ENCODE measurements at regions of chr3 and their contacts with region 1.

Region 1: DNA sequence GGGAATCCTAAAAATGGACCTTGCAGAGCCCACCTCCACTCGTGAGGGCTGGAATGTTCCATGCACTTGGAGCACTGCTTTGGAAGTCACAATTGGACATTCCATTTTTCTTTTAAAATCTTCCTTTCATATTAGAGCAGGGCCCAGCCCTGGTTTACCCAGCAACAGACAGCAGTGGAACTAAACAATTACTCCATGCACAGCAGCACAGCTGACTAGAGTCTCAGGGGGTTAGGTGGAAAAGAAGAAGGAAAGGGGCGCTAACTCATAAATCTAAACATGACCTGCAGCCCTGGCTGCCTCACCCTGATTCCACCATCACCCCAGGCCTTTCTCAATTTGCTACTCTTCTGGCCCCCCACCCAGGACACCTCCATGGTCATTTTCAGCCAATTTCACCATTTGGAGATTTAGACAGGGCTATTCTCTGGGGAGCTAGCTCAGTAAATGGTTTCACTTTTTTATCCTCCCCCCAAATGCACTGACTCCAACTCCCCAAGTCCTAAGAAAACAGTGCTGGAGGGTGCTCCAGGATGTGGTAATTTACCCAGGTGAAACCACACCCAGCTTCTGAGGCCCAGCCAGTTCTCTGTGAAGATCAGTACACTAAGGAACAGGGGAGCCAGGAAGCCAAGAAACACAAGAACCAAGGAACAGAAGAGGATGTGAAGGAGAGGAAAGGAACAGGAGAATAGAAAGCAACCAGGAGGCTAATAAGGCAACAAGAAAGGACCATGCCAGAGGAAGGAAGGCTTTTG is 1.6 kb upstream of the LRRC31 start:
- DNase-seq: peak; percentile 43
- ATAC-seq: peak; percentile 88
- H3K4me3 ChIP-seq: no peak overlapping the region
- H3K27ac ChIP-seq: no peak overlapping the region
- H3K4me1 ChIP-seq: peaks cover 10% of the 10 kb centered on the region
- H3K27me3 ChIP-seq: no peaks in the 10 kb centered on the region
- CTCF ChIP-seq: no peak

Region 2: GRCh38 chr3:169911272-169911671 is 40.0 kb after region 1 on chr3 and contains the start of gene SAMD7:
- CTCF ChIA-PET with region 1: no interaction called
- POLR2A ChIA-PET with region 1: no interaction called
- intact Hi-C with region 1: loop called (anchors 2 kb)
- DNase-seq: no peak
- ATAC-seq: no peak
- H3K4me3 ChIP-seq: no peak within 1 kb of the TSS
- H3K27ac ChIP-seq: no peak within 1 kb of the TSS
- H3K4me1 ChIP-seq: no peaks in the 10 kb centered on the region
- H3K27me3 ChIP-seq: no peaks in the 10 kb centered on the region
- CTCF ChIP-seq: no peak
- total RNA-seq, gene SAMD7: not detected in 2 replicates

Region 3: DNA sequence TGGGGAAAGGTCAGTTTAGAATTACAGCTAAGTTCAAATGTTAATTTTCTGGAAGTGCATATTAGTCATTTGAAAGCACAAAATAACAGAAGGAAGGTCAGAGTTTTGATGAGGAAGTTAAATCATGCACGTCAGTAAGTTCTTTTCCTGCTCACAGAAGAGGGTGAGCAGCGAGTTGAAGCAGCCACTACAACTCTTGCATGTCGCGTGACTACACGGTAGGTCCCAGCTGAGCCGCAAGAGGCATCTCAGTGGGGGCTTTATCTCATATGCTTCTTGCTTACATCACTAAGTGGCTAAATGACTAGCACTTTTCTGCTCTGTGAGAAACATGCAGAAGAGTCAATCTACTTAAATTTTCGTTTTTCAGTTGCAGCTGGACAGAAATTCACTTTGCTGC is 74.0 kb after region 1 on chr3:
- CTCF ChIA-PET with region 1: no interaction called
- POLR2A ChIA-PET with region 1: no interaction called
- intact Hi-C with region 1: no loop called
- DNase-seq: no peak
- ATAC-seq: no peak
- H3K4me3 ChIP-seq: no peak overlapping the region
- H3K27ac ChIP-seq: no peak overlapping the region
- H3K4me1 ChIP-seq: no peaks in the 10 kb centered on the region
- H3K27me3 ChIP-seq: 0 out of 2 replicates have a peak, but pooled peaks cover 4% of the 10 kb centered on the region
- CTCF ChIP-seq: no peak

Measured in PC-3 (cell line).